Heart right ventricle (tissue), 16 donors: ENCODE measurements at regions of chr19 and their contacts with region 1.

Region 1: DNA sequence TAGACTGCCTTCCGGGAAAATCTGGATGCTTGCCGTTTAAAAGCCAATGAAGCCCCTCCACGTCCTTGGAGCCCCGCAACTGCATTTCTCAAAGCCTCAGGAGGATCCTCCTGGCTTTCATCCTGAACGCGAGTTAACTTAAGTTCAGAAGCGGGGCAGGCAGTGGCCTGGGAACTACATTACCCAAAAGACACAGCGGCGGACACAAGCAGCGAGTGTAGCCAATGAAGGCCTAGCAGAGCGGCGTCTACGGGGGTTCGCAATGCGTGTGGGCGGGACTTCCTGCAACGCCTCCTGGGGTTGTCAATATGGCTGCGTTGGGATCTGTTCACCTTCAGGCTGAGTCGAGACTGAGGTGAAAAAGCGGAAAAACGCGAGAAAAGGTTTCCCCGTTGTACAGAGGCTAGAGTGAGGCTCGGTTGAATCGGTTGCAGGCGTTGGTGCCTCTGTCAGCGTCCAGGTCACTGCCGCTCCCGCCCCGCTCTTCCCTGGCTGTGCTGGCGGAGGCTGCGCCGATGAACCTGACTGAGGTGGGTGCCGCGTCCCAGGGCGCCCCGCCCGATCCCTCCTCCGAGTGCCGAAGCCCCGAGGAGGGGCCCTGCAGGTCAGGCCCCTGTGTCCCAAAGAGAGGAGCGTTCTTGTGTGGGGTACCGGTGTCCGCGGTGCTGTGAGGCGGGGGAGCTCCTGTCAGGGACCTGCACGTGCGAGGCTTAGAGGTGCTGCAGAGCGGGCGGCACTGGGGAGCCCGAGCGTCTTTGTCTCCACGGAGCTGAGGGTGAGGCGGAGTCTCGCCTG is at the start of gene ZNF17:
- DNase-seq: peak; percentile 92 to 96
- ATAC-seq: peak; percentile 98 to 100 (median 100)
- H3K4me3 ChIP-seq: peak within 1 kb of the TSS; percentile 75 to 100 (median 88)
- H3K27ac ChIP-seq: peak within 1 kb of the TSS; percentile 17 to 85 (median 78)
- H3K4me1 ChIP-seq: peaks cover 3 to 32% (median 17%) of the 10 kb centered on the region in 9 donors
- H3K27me3 ChIP-seq: no peaks in the 10 kb centered on the region
- CTCF ChIP-seq: no peak
- total RNA-seq, gene ZNF17: 7.7 to 11.6 (median 10.0) TPM

Region 2: GRCh38 chr19:57191141-57192076 is 219.7 kb before region 1 on chr19 and contains the start of gene ZNF264:
- intact Hi-C with region 1: no loop called
- DNase-seq: peak; percentile 94 to 95
- ATAC-seq: peak; percentile 98 to 100 (median 99)
- H3K4me3 ChIP-seq: peak within 1 kb of the TSS; percentile 85 to 100 (median 98)
- H3K27ac ChIP-seq: peak within 1 kb of the TSS; percentile 52 to 97 (median 92)
- H3K4me1 ChIP-seq: peaks cover 0 to 30% (median 23%) of the 10 kb centered on the region in 9 donors
- H3K27me3 ChIP-seq: peaks cover 0 to 8% (median 0%) of the 10 kb centered on the region in 7 donors
- CTCF ChIP-seq: peak in 2 of 9 donors; percentile 12 to 18
- total RNA-seq, gene ZNF264: 16.5 to 23.8 (median 20.7) TPM

Region 3: DNA sequence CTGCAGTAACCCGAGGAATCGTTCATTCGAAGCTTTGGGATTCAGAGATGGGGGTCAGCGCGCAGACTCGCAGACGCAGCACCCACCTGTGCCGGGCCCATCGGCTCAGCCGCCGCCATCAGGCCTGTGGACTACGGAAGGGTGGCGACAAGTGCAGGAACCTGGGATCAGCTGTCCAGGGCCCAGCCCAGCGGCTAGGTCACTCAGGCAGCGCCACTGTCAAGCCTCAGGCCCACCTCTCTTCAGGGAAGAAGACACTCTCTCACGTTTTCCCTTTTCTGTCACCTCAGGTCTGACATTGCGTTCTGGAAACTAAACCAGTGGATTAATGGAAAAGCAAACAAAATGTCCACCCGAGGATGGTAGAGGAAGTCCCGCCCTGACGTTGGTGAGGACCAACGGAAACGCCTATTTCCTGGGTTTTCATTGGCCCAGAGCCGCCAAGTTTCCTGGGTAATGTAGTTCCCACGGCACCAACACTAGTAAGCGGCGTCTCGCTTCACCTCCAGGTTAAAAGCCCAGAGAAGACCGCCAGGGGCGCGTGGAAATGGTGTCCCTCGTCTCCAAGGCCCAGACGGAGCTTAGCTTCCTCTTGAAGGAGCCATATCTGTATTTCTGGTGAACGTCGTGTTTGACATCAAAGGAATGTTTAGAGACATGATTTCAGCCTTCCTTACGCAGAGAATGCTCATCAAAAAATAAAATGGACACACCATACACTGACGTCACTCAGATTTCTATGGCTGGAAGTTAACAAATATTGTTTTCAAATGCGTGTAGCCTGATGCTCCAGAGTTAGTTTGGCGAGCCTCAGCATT is 66.3 kb after region 1 on chr19 and contains the start of gene ZNF772:
- intact Hi-C with region 1: loop called in 1 of 10 experiments (anchors 2 kb)
- DNase-seq: peak; percentile 84 to 97
- ATAC-seq: peak; percentile 98 to 100 (median 100)
- H3K4me3 ChIP-seq: peak within 1 kb of the TSS; percentile 58 to 92 (median 76)
- H3K27ac ChIP-seq: peak within 1 kb of the TSS; percentile 28 to 94 (median 88)
- H3K4me1 ChIP-seq: peaks cover 0 to 17% (median 10%) of the 10 kb centered on the region in 9 donors
- H3K27me3 ChIP-seq: no peaks in the 10 kb centered on the region
- CTCF ChIP-seq: peak; percentile 15 to 87 (median 72)
- total RNA-seq, gene ZNF772: 18.6 to 27.4 (median 23.2) TPM